Activated CD4-positive, alpha-beta T cell treated with anti-CD3 and anti-CD28 coated beads, Interleukin-2, amount 10 ng/mL, durations not matched to agents 24 days and 14 days (primary cell): ENCODE measurements at regions of chr11 and their contacts with region 1.

Region 1: DNA sequence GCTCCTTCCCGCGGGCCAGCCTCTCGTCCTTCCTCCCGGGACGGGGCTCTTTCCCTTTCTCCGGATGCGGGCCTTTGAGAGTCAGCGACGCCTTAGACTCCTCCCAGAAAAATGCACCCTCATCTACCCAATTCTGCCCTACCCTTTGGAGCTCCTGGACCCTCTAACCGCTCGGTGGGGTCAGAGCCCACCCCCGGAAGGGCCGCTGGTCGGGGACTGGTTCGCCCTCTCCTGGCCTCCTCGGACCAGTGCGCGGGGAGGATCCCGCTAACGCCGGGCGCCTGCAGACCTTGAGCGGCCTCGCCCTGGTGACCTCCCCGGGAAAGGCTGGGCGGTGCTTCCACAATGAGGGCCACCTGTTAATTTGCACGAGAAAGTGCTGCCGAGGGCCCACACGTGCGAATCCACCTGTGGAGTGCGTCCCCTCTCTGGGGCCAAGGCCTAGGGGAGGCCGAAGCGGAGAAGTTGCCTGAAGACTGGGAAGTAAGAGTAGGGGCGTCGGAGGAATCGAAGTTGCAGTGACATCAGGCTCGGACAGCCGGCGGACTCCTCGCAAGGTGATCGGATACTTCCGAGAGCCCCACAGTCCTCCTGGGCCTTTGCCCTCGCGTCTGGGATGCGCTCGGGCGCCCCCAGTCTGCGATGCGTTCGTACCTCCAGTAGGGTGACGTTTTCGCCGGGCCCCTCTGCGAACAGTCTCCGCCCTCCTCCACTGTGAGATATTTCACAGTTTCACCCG is 61.5 kb downstream of the ENDOD1 start:
- DNase-seq: peak; percentile 97
- H3K4me3 Mint-ChIP-seq: peak overlapping the region; percentile 88
- H3K27ac Mint-ChIP-seq: peak overlapping the region; percentile 91
- H3K4me1 Mint-ChIP-seq: peaks cover 50% of the 10 kb centered on the region
- H3K27me3 Mint-ChIP-seq: no peaks in the 10 kb centered on the region

Region 2: GRCh38 chr11:94623120-94623735 is 527.9 kb before region 1 on chr11:
- intact Hi-C with region 1: loop called (anchors 1 kb)
- DNase-seq: peak; percentile 86
- H3K4me3 Mint-ChIP-seq: no peak overlapping the region
- H3K27ac Mint-ChIP-seq: no peak overlapping the region
- H3K4me1 Mint-ChIP-seq: no peaks in the 10 kb centered on the region
- H3K27me3 Mint-ChIP-seq: peaks cover 3% of the 10 kb centered on the region

Region 3: DNA sequence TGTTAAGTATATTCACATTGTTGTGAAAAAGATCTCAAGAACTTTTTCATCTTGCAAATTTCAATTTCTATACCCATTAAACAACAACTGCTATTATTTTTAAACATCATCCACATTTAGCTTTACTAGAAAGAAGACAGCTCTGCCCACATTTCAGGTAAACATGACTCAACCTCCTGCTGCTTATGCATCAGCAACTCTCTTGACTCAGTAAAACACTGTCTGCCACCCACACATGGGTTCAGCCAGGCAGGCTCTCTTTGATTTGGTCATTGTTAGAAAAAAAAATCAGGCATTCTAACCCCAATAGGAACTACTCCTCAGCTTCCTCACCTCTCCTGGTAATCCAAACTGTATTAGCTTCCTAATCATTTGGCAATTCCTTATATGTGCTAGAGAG is 66.6 kb before region 1 on chr11:
- intact Hi-C with region 1: loop called (anchors 1 kb)
- DNase-seq: peak; percentile 71
- H3K4me3 Mint-ChIP-seq: peak overlapping the region; percentile 18
- H3K27ac Mint-ChIP-seq: peak overlapping the region; percentile 61
- H3K4me1 Mint-ChIP-seq: peaks cover 52% of the 10 kb centered on the region
- H3K27me3 Mint-ChIP-seq: no peaks in the 10 kb centered on the region

Region 4: DNA sequence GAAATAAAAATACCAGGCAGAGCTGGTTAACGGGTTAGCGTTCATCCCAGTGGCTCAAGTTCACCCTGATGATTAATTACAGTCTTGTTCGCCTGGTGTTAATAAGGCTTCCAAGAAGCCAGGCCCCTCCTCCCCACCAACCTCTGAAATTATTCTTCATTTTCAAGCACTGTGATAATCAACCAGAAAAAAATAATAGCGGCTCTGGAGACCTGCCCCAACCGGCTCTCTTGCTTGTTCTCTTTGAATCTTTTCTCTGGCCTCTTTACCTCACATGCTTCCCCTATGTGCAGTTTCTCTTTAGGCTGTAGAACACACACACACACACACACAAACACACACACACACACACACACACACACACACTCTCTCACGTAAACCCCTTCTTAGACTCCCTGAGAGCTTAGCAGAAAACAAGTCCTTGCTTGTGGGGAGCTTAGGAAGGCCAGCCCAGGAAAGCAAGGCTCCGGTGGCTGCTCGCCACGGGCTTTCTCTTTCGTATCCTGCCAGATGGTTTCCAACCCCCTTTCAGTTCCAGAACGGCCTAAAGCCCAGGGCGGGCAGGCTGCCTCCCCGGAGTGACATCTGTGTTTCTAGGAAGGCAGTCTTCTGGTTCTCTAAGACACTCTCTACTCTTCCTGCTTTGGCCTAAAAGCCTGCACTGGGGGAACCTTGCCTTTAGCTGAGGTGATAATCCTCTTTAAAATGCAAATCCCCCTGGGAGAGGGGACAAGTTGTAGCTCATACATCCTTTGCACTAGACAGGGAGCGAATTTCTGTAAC is 186.3 kb after region 1 on chr11:
- intact Hi-C with region 1: loop called (anchors 5 kb)
- DNase-seq: peak; percentile 90
- H3K4me3 Mint-ChIP-seq: no peak overlapping the region
- H3K27ac Mint-ChIP-seq: no peak overlapping the region
- H3K4me1 Mint-ChIP-seq: peaks cover 10% of the 10 kb centered on the region
- H3K27me3 Mint-ChIP-seq: peaks cover 2% of the 10 kb centered on the region

Region 5: GRCh38 chr11:95705485-95706124 is 554.5 kb after region 1 on chr11:
- intact Hi-C with region 1: loop called (anchors 1 kb)
- DNase-seq: peak; percentile 96
- H3K4me3 Mint-ChIP-seq: no peak overlapping the region
- H3K27ac Mint-ChIP-seq: no peak overlapping the region
- H3K4me1 Mint-ChIP-seq: peaks cover 17% of the 10 kb centered on the region
- H3K27me3 Mint-ChIP-seq: no peaks in the 10 kb centered on the region

Region 6: GRCh38 chr11:96389720-96390487 is 1238.8 kb after region 1 on chr11 and contains the starts of genes CCDC82 and JRKL:
- intact Hi-C with region 1: loop called (anchors 2 kb)
- DNase-seq: peak; percentile 99
- H3K4me3 Mint-ChIP-seq: peak within 1 kb of the TSS; percentile 93
- H3K27ac Mint-ChIP-seq: peak within 1 kb of the TSS; percentile 96
- H3K4me1 Mint-ChIP-seq: peaks cover 52% of the 10 kb centered on the region
- H3K27me3 Mint-ChIP-seq: no peaks in the 10 kb centered on the region
- total RNA-seq, gene CCDC82: 27.6 and 31.8 TPM in 2 replicates
- total RNA-seq, gene JRKL: 9.9 and 11.9 TPM in 2 replicates